ENCODE measurements at regions of chr17 and their contacts with region 1.

Region 1: GRCh38 chr17:17237026-17237799 is at the start of gene FLCN:
- DNase-seq: peak; percentile 92 to 94
- ATAC-seq: peak; percentile 94 to 98 (median 96)
- H3K4me3 ChIP-seq: peak within 1 kb of the TSS; percentile 85 to 100 (median 94)
- H3K27ac ChIP-seq: peak within 1 kb of the TSS; percentile 88 to 99 (median 98)
- H3K4me1 ChIP-seq: peaks cover 2 to 46% (median 34%) of the 10 kb centered on the region in 9 donors
- H3K27me3 ChIP-seq: no peaks in the 10 kb centered on the region
- CTCF ChIP-seq: no peak
- total RNA-seq, gene FLCN: 26.4 to 45.7 (median 35.8) TPM

Region 2: GRCh38 chr17:16980813-16981731 is 256.1 kb before region 1 on chr17:
- intact Hi-C with region 1: no loop called
- DNase-seq: no peak
- ATAC-seq: peak in 1 of 8 donors; percentile 14
- H3K4me3 ChIP-seq: no peak overlapping the region
- H3K27ac ChIP-seq: no peak overlapping the region
- H3K4me1 ChIP-seq: peaks cover 0 to 8% (median 0%) of the 10 kb centered on the region in 9 donors
- H3K27me3 ChIP-seq: peaks cover 0 to 6% (median 0%) of the 10 kb centered on the region in 7 donors
- CTCF ChIP-seq: no peak

Region 3: GRCh38 chr17:17119533-17119932 is 117.7 kb before region 1 on chr17:
- intact Hi-C with region 1: no loop called
- DNase-seq: no peak
- ATAC-seq: peak in 7 of 8 donors; percentile 11 to 40 (median 25)
- H3K4me3 ChIP-seq: no peak overlapping the region
- H3K27ac ChIP-seq: peak overlapping the region; percentile 14 to 85 (median 72)
- H3K4me1 ChIP-seq: peaks cover 45 to 94% (median 76%) of the 10 kb centered on the region in 9 donors
- H3K27me3 ChIP-seq: no peaks in the 10 kb centered on the region
- CTCF ChIP-seq: no peak

Region 4: GRCh38 chr17:17141860-17142552 is 95.2 kb before region 1 on chr17:
- intact Hi-C with region 1: loop called in 3 of 10 experiments (anchors 5 to 10 kb)
- DNase-seq: no peak
- ATAC-seq: peak in 5 of 8 donors; percentile 38 to 55 (median 49)
- H3K4me3 ChIP-seq: no peak overlapping the region
- H3K27ac ChIP-seq: peak overlapping the region in 6 of 10 donors; percentile 0 to 60 (median 16)
- H3K4me1 ChIP-seq: peaks cover 5 to 58% (median 23%) of the 10 kb centered on the region in 9 donors
- H3K27me3 ChIP-seq: no peaks in the 10 kb centered on the region
- CTCF ChIP-seq: peak; percentile 59 to 85 (median 81)

Region 5: DNA sequence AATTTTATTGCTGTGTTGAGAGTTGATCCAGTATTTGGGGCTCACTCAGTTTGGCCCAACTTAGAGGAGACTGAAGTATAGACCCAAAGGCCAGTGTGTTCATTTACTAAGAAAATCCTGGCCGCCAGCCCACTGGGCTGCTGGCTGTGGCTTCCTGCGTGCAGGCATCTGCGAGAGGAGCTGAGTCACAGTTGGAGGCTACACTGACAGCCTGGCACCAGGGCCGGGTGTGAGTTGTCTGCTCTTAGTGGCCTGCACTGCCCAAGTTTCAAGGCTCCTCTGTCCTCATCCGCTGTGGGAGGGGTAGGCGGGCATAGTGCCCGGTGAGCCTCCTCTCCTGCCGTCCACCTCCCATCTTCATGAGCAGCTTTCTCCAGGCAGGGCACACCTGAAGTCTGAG is 85.3 kb before region 1 on chr17:
- intact Hi-C with region 1: loop called in 3 of 10 experiments (anchors 10 kb)
- DNase-seq: peak; percentile 85
- ATAC-seq: peak; percentile 86 to 97 (median 94)
- H3K4me3 ChIP-seq: no peak overlapping the region
- H3K27ac ChIP-seq: peak overlapping the region; percentile 60 to 83 (median 68)
- H3K4me1 ChIP-seq: peaks cover 13 to 53% (median 35%) of the 10 kb centered on the region in 9 donors
- H3K27me3 ChIP-seq: no peaks in the 10 kb centered on the region
- CTCF ChIP-seq: no peak

Region 6: DNA sequence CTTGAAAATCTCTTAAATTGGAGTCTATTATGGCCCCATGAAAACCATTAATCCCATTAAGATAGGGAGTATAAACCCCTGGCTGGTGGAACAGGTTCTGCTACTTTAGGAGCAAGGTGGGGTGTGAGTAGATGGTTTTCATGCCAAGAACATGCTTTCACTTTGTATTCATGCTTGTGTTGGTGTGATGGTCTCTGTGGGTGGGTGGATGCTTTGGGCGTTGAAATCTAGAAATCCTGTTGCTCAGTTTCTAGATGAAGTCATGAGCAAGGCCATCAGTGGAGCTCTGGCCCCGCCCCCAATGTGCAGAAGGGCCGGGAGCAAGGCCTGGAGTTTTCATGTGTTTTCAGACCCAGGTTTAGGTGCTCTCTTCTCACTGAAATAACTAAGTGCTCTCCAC is 51.2 kb before region 1 on chr17:
- intact Hi-C with region 1: loop called in 1 of 10 experiments (anchors 5 kb)
- DNase-seq: no peak
- ATAC-seq: no peak
- H3K4me3 ChIP-seq: no peak overlapping the region
- H3K27ac ChIP-seq: peak overlapping the region in 2 of 10 donors; percentile 46 to 75
- H3K4me1 ChIP-seq: peaks cover 5 to 77% (median 57%) of the 10 kb centered on the region in 9 donors
- H3K27me3 ChIP-seq: no peaks in the 10 kb centered on the region
- CTCF ChIP-seq: no peak

Region 7: GRCh38 chr17:17280613-17281549 is 43.7 kb after region 1 on chr17 and contains the start of gene COPS3:
- intact Hi-C with region 1: loop called in 1 of 10 experiments (anchors 5 kb)
- DNase-seq: peak; percentile 99
- ATAC-seq: peak; percentile 96 to 98 (median 97)
- H3K4me3 ChIP-seq: peak within 1 kb of the TSS; percentile 85 to 100 (median 94)
- H3K27ac ChIP-seq: peak within 1 kb of the TSS; percentile 95 to 100 (median 98)
- H3K4me1 ChIP-seq: peaks cover 0 to 47% (median 33%) of the 10 kb centered on the region in 9 donors
- H3K27me3 ChIP-seq: no peaks in the 10 kb centered on the region
- CTCF ChIP-seq: no peak
- total RNA-seq, gene COPS3: 63.8 to 84.4 (median 71.1) TPM